ENCODE measurements at regions of chr19 and their contacts with region 1.

Region 1: DNA sequence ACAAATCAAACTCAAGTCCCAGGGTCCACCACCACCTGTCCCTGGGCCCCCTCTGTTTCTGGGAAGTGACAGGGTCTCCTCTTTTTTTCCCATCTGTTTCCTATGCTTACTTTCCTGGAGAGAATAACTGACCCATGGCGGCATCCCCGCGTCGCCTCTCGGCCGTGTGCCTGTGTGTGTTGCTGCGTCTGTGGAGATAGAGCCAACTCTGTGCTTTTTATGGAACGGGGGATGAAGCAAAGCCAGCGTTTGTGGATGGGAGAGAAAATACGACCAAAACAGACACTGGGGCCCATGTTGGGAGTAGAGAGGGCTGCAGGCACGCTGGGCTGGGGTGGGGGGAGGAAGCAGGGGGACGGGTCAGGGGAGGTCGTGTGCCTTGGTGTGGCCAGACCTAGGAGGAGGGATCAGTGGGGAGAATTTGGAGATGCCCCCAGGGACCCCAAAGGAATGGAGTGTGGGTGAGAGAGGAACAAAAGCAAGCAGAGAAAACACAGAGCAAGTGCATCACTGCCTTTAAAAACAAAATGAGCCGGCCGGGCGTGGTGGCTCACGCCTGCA is 16.6 kb downstream of the PLK5 start:
- DNase-seq: no peak
- ATAC-seq: no peak
- H3K4me3 ChIP-seq: no peak overlapping the region
- H3K4me3 Mint-ChIP-seq: no peak overlapping the region
- H3K27ac ChIP-seq: no peak overlapping the region
- H3K27ac Mint-ChIP-seq: no peak overlapping the region
- H3K4me1 ChIP-seq: no peaks in the 10 kb centered on the region
- H3K4me1 Mint-ChIP-seq: no peaks in the 10 kb centered on the region
- H3K27me3 ChIP-seq: peaks cover 4 to 59% of the 10 kb centered on the region in 2 experiments
- H3K27me3 Mint-ChIP-seq: peaks cover 14 to 30% of the 10 kb centered on the region in 2 donors

Region 2: GRCh38 chr19:1837222-1837565 is 296.7 kb after region 1 on chr19:
- CTCF ChIA-PET with region 1: interaction called in 1 of 2 experiments, 10 read pairs
- POLR2A ChIA-PET with region 1: no interaction called
- DNase-seq: no peak
- ATAC-seq: peak in 1 of 4 experiments; percentile 5
- H3K4me3 ChIP-seq: no peak overlapping the region
- H3K4me3 Mint-ChIP-seq: no peak overlapping the region
- H3K27ac ChIP-seq: no peak overlapping the region
- H3K27ac Mint-ChIP-seq: no peak overlapping the region
- H3K4me1 ChIP-seq: peaks cover 0 to 56% of the 10 kb centered on the region in 2 experiments
- H3K4me1 Mint-ChIP-seq: peaks cover 35 to 49% (median 38%) of the 10 kb centered on the region in 3 donors
- H3K27me3 ChIP-seq: no peaks in the 10 kb centered on the region
- H3K27me3 Mint-ChIP-seq: no peaks in the 10 kb centered on the region

Measured in T-cell (primary cell).